ENCODE measurements at regions of chr22 and their contacts with region 1.

Region 1: DNA sequence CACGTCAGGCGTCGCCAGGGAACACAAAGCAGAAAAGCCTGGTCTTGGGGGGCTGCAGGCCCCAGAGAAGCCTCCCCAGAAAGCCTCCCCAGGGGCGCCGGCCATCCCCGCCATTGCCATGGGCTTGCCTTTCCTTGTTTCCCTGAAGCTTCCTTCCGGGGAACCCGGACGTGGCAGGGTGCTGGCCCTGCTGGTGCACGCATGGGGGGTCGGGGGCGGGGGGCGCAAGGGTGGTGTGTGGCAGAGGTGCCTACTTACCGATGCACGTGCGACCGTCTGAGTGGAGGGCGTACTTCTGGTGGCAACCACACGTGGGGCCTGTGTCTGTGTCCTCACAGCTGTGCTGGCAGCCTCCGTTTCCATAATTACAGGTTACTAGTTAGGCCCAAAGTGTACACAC is 71.0 kb upstream of the TTLL12 start:
- DNase-seq: no peak
- ATAC-seq: no peak
- H3K4me3 ChIP-seq: no peak overlapping the region
- H3K27ac ChIP-seq: peak overlapping the region in 1 of 12 donors; percentile 14
- H3K4me1 ChIP-seq: peaks cover 0 to 13% (median 1%) of the 10 kb centered on the region in 12 donors
- H3K27me3 ChIP-seq: no peaks in the 10 kb centered on the region
- CTCF ChIP-seq: no peak
- POLR2A ChIP-seq: no peak

Region 2: DNA sequence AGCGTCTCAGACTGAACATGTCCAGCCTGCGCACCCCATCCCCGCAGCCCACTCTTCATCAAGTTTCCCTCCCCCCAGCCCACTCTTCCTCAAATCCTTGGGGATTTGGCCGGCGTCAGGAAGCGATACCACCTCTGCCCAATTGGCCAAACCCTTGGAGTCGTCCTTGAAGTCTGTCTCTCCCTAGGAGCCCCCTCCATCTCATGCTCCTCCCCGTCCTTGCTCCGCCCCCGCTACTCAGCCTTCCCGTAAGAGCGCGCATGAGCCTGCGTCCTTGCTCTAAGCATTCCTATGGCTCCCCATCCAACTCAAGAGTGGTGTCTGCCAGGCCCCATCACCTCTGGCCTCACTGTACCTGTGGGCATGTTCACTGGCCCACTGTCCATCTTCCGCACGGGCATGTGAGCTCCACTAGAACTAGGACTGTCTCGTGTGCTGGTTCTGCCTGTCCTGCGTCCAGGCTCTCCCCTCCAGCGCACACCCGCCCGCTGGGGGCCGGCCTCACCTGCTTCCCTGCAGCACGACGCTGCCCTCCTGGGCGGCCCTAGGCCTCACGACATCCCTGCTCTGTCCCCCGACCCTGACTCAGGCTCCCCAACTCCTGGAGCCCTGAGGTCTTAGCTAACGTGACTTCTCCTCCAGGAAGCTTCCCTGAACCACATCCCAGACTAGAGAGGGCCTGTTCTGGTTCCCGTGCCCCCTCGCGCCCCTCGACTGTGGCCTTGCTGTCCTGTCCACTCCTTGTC is 40.5 kb before region 1 on chr22:
- intact Hi-C with region 1: no loop called
- DNase-seq: no peak
- ATAC-seq: no peak
- H3K4me3 ChIP-seq: no peak overlapping the region
- H3K27ac ChIP-seq: no peak overlapping the region
- H3K4me1 ChIP-seq: peaks cover 0 to 12% (median 10%) of the 10 kb centered on the region in 12 donors
- H3K27me3 ChIP-seq: peaks cover 0 to 24% (median 0%) of the 10 kb centered on the region in 9 donors
- CTCF ChIP-seq: no peak
- POLR2A ChIP-seq: no peak

Region 3: DNA sequence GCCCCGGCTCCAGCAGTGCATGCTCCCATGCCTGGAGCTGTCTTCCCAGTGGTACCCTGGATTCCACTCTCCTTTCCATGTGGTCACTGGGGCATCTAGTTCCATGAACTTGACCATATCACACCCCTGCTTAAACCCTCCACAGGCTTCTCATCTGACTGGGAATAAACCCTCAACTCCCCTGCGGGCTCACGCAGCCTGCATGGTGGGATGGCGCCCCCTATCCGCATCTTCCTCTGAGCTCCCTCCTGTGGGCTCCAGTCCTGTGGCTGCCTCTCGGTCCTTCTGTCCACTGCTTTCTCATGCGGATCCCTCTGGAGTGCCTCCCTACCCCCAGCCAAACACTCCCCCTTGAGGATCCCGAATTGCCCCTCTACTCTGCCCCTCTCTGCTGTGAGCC is 29.6 kb before region 1 on chr22:
- intact Hi-C with region 1: no loop called
- DNase-seq: no peak
- ATAC-seq: peak in 1 of 4 donors; percentile 48
- H3K4me3 ChIP-seq: no peak overlapping the region
- H3K27ac ChIP-seq: no peak overlapping the region
- H3K4me1 ChIP-seq: peaks cover 0 to 7% (median 0%) of the 10 kb centered on the region in 12 donors
- H3K27me3 ChIP-seq: peaks cover 0 to 10% (median 0%) of the 10 kb centered on the region in 9 donors
- CTCF ChIP-seq: peak; percentile 15 to 50 (median 34)
- POLR2A ChIP-seq: no peak

Region 4: GRCh38 chr22:43239193-43239780 is 18.7 kb before region 1 on chr22:
- intact Hi-C with region 1: loop called in 1 of 10 experiments (anchors 2 kb)
- DNase-seq: peak in 3 of 5 donors; percentile 28 to 54 (median 30)
- ATAC-seq: peak in 1 of 4 donors; percentile 11
- H3K4me3 ChIP-seq: no peak overlapping the region
- H3K27ac ChIP-seq: no peak overlapping the region
- H3K4me1 ChIP-seq: peaks cover 0 to 43% (median 15%) of the 10 kb centered on the region in 12 donors
- H3K27me3 ChIP-seq: peaks cover 0 to 8% (median 0%) of the 10 kb centered on the region in 9 donors
- CTCF ChIP-seq: no peak
- POLR2A ChIP-seq: no peak

Measured in heart left ventricle (tissue), 16 donors.